Astrocyte of the cerebellum (primary cell): ENCODE measurements at regions of chr3 and their contacts with region 1.

Region 1: GRCh38 chr3:187533797-187534196 is 136.4 kb downstream of the SST start:
- DNase-seq: no peak
- H3K4me3 ChIP-seq: no peak overlapping the region
- CTCF ChIP-seq: no peak

Region 2: DNA sequence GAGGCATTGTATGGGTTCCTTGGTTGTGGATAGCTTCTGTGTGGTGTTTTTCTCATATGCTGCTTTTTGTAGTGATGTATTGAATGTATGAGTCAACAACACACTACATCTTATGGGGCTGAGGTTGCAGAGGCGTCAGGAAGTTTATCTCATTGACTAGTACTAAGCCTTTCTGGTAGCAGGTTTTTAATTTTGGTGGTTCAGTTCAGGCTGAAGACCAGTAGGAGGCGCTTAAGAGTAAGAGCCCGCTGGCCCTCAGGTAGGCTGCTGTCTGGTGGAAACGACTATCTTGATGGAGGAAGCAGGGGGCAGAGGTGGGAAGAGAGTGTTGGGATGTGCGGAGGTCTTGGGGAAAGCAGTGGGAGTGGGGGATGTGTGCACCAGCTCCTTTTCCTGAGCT is 103.2 kb before region 1 on chr3:
- in situ Hi-C with region 1: loop called (anchors 5 kb)
- DNase-seq: no peak
- H3K4me3 ChIP-seq: no peak overlapping the region
- CTCF ChIP-seq: no peak

Region 3: DNA sequence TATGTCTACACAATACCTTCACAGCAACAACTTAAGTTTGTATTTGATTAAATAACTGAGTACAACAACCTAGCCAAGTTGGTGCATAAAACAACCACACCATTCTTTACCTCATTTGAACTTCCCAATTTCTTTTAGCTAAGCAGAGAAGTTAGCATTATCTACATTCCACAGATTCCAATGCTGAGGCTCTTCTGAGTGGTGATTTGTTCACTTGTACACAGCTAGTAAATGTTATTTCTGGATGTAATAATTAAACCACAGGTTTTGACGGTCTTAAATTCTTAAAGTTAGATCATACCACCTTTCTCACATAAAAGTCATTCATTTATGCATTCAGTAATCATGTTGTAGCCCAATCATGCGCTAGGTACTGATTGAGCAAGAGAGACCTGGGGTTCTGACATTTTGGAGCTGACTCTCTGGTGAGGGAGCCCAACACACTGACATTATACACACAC is 33.9 kb after region 1 on chr3:
- in situ Hi-C with region 1: no loop called
- DNase-seq: peak; percentile 94
- H3K4me3 ChIP-seq: no peak overlapping the region
- CTCF ChIP-seq: no peak